Mammary epithelial cell (primary cell): ENCODE measurements at regions of chr12 and their contacts with region 1.

Region 1: DNA sequence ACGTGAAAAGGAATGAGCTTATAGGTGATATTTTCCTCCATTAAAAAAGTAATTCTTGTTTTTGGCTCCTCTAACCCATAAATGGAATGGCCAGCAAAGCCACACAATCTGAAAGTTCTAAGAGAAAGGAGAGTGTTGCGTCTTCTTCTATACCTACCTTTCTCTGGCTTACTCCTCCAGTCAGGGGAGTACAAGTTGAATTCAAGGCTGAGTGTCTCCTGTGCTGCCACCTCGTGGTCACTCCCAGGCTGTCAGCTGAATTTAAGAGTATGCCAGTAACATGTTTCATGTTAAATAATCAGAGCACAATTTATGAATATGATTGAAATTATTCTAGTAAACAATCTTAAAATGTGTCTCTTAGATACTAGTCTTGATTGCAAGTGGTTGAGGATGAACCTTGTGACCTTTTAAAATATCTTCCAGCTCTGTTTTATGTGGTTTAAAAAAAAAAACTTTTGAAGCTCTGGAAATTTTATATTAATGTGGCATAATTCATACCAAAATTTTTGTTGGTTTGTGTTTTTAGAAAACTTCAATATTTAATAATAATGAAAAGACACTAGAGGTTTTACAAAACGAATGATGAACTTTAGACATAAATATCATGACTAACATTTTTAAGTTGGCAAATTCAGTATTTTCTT is 31.7 kb downstream of the PTHLH start:
- DNase-seq: peak; percentile 68
- H3K4me3 ChIP-seq: no peak overlapping the region
- H3K27ac ChIP-seq: no peak overlapping the region
- H3K4me1 ChIP-seq: no peaks in the 10 kb centered on the region
- H3K27me3 ChIP-seq: no peaks in the 10 kb centered on the region
- CTCF ChIP-seq: peak; percentile 84 to 92

Region 2: GRCh38 chr12:27751386-27752047 is 189.4 kb before region 1 on chr12:
- CTCF ChIA-PET with region 1: no interaction called
- dilution Hi-C with region 1: no loop called
- in situ Hi-C with region 1: loop called in 1 of 2 experiments (anchors 10 kb)
- intact Hi-C with region 1: no loop called
- DNase-seq: peak; percentile 88
- H3K4me3 ChIP-seq: no peak overlapping the region
- H3K27ac ChIP-seq: peak overlapping the region; percentile 33
- H3K4me1 ChIP-seq: peaks cover 42% of the 10 kb centered on the region
- H3K27me3 ChIP-seq: no peaks in the 10 kb centered on the region
- CTCF ChIP-seq: no peak

Region 3: DNA sequence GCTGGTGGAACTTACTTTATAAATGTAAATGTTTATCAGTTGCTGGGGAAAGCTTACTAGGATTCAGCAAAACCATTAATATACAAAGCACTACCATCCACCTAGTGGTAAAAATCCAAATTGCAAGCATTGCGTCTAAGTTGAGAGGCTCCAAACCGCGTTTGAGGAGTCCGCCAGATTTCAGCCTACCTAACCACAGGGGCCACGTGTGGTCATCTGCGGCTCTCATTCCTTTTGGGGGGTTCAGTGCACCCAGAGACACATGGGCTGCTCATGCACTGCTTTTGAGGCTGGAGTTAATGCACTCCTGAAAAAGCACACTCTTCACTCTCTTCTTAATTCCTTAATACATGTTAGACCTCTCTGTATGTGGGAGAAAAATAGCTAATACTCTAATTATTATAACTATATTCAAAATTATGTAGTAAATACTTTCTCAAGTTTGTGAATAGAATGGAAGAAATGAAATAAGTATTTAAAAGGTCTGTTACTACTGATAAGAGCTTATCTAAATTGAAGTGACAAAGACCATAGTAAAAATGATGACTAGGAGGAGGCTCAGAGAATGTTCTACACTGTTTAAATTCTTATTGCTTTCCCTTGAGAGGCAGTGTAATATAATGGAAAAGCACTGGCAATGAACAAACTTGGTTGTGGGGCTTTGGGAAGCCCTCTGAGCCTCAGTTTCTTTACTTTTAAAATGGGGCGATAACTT is 119.5 kb before region 1 on chr12:
- CTCF ChIA-PET with region 1: interaction called, 4 read pairs
- dilution Hi-C with region 1: no loop called
- in situ Hi-C with region 1: loop called in 1 of 2 experiments (anchors 25 kb)
- intact Hi-C with region 1: loop called (anchors 2 kb)
- DNase-seq: peak; percentile 86
- H3K4me3 ChIP-seq: peak overlapping the region in 1 of 3 experiments; percentile 14
- H3K27ac ChIP-seq: peak overlapping the region; percentile 100
- H3K4me1 ChIP-seq: peaks cover 26% of the 10 kb centered on the region
- H3K27me3 ChIP-seq: no peaks in the 10 kb centered on the region
- CTCF ChIP-seq: peak; percentile 81 to 92

Region 4: GRCh38 chr12:27840244-27840999 is 100.5 kb before region 1 on chr12:
- CTCF ChIA-PET with region 1: no interaction called
- dilution Hi-C with region 1: no loop called
- in situ Hi-C with region 1: loop called in 1 of 2 experiments (anchors 25 kb)
- intact Hi-C with region 1: loop called (anchors 2 kb)
- DNase-seq: no peak
- H3K4me3 ChIP-seq: no peak overlapping the region
- H3K27ac ChIP-seq: no peak overlapping the region
- H3K4me1 ChIP-seq: peaks cover 8% of the 10 kb centered on the region
- H3K27me3 ChIP-seq: no peaks in the 10 kb centered on the region
- CTCF ChIP-seq: peak; percentile 45 to 55

Region 5: DNA sequence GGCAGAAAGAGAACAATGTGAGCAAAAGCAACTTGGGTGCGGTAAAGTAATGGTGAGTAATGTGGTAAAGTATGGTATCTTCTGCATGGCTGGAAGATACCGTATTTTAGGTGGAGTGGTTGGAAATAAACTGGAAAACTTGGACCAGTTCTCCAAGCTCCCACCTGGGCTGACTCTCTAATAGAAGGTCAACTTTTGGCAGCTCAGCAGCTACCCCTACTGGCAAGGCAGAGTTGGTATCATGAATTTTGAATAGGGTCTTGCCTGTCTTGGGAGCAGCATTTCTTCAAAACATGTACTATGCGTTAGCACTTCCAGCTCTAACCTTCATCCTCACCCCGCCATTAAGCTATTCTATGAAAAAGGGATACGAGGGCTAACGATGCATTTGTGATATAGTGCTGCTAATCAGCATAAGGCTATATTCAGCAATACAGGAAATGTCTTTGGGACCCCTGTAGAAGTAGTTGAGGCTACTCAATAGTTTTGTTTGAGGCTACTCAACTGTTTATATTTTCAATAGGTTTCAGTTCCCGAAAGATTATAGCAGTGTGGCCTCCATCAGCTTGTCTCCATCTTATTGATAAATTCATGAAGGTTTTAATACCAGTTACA is 931.9 kb after region 1 on chr12:
- CTCF ChIA-PET with region 1: interaction called, 7 read pairs
- dilution Hi-C with region 1: no loop called
- in situ Hi-C with region 1: no loop called
- intact Hi-C with region 1: loop called (anchors 2 kb)
- DNase-seq: peak; percentile 78
- H3K4me3 ChIP-seq: no peak overlapping the region
- H3K27ac ChIP-seq: no peak overlapping the region
- H3K4me1 ChIP-seq: peaks cover 39% of the 10 kb centered on the region
- H3K27me3 ChIP-seq: no peaks in the 10 kb centered on the region
- CTCF ChIP-seq: peak; percentile 87 to 88

Region 6: GRCh38 chr12:28998637-28999120 is 1057.8 kb after region 1 on chr12:
- CTCF ChIA-PET with region 1: no interaction called
- dilution Hi-C with region 1: no loop called
- in situ Hi-C with region 1: no loop called
- intact Hi-C with region 1: loop called (anchors 5 kb)
- DNase-seq: peak; percentile 56
- H3K4me3 ChIP-seq: no peak overlapping the region
- H3K27ac ChIP-seq: no peak overlapping the region
- H3K4me1 ChIP-seq: peaks cover 10% of the 10 kb centered on the region
- H3K27me3 ChIP-seq: no peaks in the 10 kb centered on the region
- CTCF ChIP-seq: peak; percentile 51 to 61